Endothelial cell of umbilical vein (primary cell): ENCODE measurements at regions of chr9 and their contacts with region 1.

Region 1: DNA sequence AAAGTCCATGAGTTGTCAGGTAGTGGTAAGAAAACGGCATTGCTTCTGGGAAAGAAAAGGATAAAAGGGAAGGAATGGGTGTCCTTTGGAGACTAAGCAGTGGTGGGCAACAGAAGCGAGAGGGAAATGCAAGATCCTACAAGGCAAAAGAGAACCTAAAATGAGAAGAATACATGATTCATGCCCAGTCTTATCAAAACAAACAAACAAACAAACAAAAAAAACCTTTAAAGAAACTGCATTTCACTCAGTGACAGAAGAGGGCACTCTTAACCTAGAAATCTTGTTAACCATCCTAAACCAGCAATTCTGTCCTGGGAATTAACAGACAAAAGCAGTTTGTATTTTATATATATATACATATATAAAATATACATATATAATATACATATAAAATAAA is 88.5 kb downstream of the SUSD1 start:
- DNase-seq: peak; percentile 48
- H3K4me3 ChIP-seq: no peak overlapping the region
- H3K27ac ChIP-seq: no peak overlapping the region
- H3K4me1 ChIP-seq: peaks cover 10% of the 10 kb centered on the region
- H3K27me3 ChIP-seq: no peaks in the 10 kb centered on the region
- CTCF ChIP-seq: peak; percentile 21 to 34
- POLR2A ChIP-seq: no peak

Region 2: GRCh38 chr9:111533099-111533790 is 553.4 kb before region 1 on chr9:
- CTCF ChIA-PET with region 1: no interaction called
- POLR2A ChIA-PET with region 1: no interaction called
- dilution Hi-C with region 1: no loop called
- intact Hi-C with region 1: no loop called
- DNase-seq: no peak
- H3K4me3 ChIP-seq: no peak overlapping the region
- H3K27ac ChIP-seq: no peak overlapping the region
- H3K4me1 ChIP-seq: no peaks in the 10 kb centered on the region
- H3K27me3 ChIP-seq: no peaks in the 10 kb centered on the region
- CTCF ChIP-seq: no peak
- POLR2A ChIP-seq: no peak

Region 3: GRCh38 chr9:112194969-112195431 is 108.4 kb after region 1 on chr9:
- CTCF ChIA-PET with region 1: no interaction called
- POLR2A ChIA-PET with region 1: no interaction called
- dilution Hi-C with region 1: no loop called
- intact Hi-C with region 1: no loop called
- DNase-seq: no peak
- H3K4me3 ChIP-seq: no peak overlapping the region
- H3K27ac ChIP-seq: no peak overlapping the region
- H3K4me1 ChIP-seq: no peaks in the 10 kb centered on the region
- H3K27me3 ChIP-seq: no peaks in the 10 kb centered on the region
- CTCF ChIP-seq: no peak
- POLR2A ChIP-seq: no peak

Region 4: DNA sequence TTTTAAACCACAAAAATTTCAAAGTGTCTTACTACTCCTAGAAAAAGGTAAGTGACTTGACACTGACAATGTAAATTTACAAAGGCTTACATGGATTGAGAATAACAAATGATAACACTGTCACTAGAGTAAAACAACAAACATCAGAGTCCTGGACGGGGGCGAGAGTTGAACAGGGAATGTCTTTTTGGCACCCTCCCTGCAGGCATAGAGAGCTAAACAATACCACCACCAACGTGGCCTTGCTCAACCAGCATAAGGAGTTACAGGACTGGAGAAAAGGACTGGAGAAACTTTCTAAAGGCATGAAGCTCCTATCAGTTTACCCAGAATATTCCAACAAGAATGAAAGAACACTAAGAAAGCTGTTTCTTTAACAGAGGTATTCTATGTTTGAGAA is 191.5 kb after region 1 on chr9:
- CTCF ChIA-PET with region 1: no interaction called
- POLR2A ChIA-PET with region 1: no interaction called
- dilution Hi-C with region 1: no loop called
- intact Hi-C with region 1: no loop called
- DNase-seq: no peak
- H3K4me3 ChIP-seq: no peak overlapping the region
- H3K27ac ChIP-seq: no peak overlapping the region
- H3K4me1 ChIP-seq: peaks cover 13% of the 10 kb centered on the region
- H3K27me3 ChIP-seq: no peaks in the 10 kb centered on the region
- CTCF ChIP-seq: no peak
- POLR2A ChIP-seq: no peak

Region 5: GRCh38 chr9:112711050-112711689 is 624.5 kb after region 1 on chr9:
- CTCF ChIA-PET with region 1: interaction called, 3 read pairs
- POLR2A ChIA-PET with region 1: no interaction called
- dilution Hi-C with region 1: no loop called
- intact Hi-C with region 1: loop called (anchors 2 kb)
- DNase-seq: peak; percentile 40
- H3K4me3 ChIP-seq: no peak overlapping the region
- H3K27ac ChIP-seq: no peak overlapping the region
- H3K4me1 ChIP-seq: no peaks in the 10 kb centered on the region
- H3K27me3 ChIP-seq: no peaks in the 10 kb centered on the region
- CTCF ChIP-seq: peak; percentile 42 to 48
- POLR2A ChIP-seq: no peak

Region 6: GRCh38 chr9:112793213-112793810 is 706.7 kb after region 1 on chr9:
- CTCF ChIA-PET with region 1: interaction called, 4 read pairs
- POLR2A ChIA-PET with region 1: no interaction called
- dilution Hi-C with region 1: no loop called
- intact Hi-C with region 1: loop called (anchors 5 kb)
- DNase-seq: peak; percentile 57
- H3K4me3 ChIP-seq: no peak overlapping the region
- H3K27ac ChIP-seq: no peak overlapping the region
- H3K4me1 ChIP-seq: no peaks in the 10 kb centered on the region
- H3K27me3 ChIP-seq: no peaks in the 10 kb centered on the region
- CTCF ChIP-seq: peak; percentile 67 to 80
- POLR2A ChIP-seq: no peak